ENCODE measurements at regions of chr3 and their contacts with region 1.

Region 1: GRCh38 chr3:39288300-39288808 is 8.5 kb upstream of the CX3CR1 start:
- DNase-seq: peak; percentile 61 to 91 (median 72)
- ATAC-seq: peak; percentile 94
- H3K4me3 ChIP-seq: no peak overlapping the region
- H3K4me3 Mint-ChIP-seq: no peak overlapping the region
- H3K27ac ChIP-seq: no peak overlapping the region
- H3K27ac Mint-ChIP-seq: no peak overlapping the region
- H3K4me1 ChIP-seq: peaks cover 22% of the 10 kb centered on the region
- H3K4me1 Mint-ChIP-seq: peaks cover 12% of the 10 kb centered on the region
- H3K27me3 ChIP-seq: no peaks in the 10 kb centered on the region
- H3K27me3 Mint-ChIP-seq: no peaks in the 10 kb centered on the region
- CTCF ChIP-seq: peak; percentile 92

Region 2: DNA sequence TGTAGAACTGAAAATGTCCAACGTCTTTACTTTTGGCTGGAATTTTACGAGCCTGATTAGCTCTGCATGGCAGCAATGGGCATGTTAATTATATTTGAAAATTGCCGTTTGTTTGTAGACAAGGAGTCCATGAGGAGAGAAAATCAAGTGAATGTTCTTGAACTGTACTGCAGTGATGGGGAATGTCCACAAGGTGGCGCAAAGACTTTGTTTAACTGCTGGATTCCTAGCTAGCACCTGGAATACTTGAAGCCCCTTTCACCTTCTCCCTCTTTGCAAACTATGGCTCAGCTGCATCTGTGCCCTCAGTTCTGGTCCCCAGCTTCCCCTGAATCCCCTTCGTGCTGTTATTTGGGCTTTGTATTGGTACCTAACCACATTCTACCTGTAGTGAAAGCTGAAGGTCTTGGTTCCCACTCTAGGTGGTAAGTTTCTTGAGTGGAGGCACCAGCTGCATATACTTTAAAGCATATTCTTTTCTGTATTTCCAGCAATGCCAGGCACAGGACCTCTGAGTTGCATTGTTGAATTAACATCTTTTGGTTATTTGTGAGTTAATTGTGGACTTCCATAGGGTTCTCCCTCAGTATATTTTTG is 766.9 kb before region 1 on chr3:
- CTCF ChIA-PET with region 1: interaction called, 5 read pairs
- POLR2A ChIA-PET with region 1: no interaction called
- intact Hi-C with region 1: loop called (anchors 5 kb)
- DNase-seq: peak; percentile 41 to 82 (median 54)
- ATAC-seq: peak; percentile 69
- H3K4me3 ChIP-seq: no peak overlapping the region
- H3K4me3 Mint-ChIP-seq: no peak overlapping the region
- H3K27ac ChIP-seq: no peak overlapping the region
- H3K27ac Mint-ChIP-seq: peak overlapping the region; percentile 57
- H3K4me1 ChIP-seq: peaks cover 16% of the 10 kb centered on the region
- H3K4me1 Mint-ChIP-seq: peaks cover 40% of the 10 kb centered on the region
- H3K27me3 ChIP-seq: no peaks in the 10 kb centered on the region
- H3K27me3 Mint-ChIP-seq: no peaks in the 10 kb centered on the region
- CTCF ChIP-seq: peak; percentile 93

Region 3: DNA sequence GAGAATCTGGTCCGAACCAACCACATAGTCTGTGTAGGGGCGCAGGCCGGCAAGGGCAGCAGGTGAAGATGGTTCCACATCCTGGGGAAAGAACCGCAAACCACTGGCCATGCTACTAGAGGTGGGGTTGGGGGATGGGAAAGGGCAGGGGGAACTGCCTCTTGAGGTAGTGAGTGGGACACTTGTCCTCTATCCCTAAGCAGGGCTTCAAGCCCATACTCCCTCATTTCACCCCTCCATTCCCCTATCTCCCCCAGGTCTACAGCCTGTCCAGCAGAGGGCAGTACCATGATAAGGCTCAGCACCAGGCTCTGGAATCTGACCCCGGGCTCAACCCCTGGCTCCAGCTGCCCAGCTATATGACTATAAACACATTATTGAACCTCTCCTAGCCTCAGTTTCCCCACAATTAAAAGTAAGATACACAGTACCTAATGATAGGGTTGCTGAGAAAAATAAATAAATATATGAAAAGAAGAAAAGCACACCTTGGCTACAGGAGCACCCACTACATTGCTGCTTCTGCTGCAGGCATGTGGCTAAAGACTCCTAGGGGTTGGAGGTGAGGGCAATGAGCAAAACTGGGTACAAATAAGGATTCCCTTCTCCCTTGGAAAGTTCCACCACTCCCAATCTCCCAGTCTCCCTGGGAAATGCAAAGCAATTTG is 187.2 kb before region 1 on chr3:
- CTCF ChIA-PET with region 1: interaction called, 24 read pairs
- POLR2A ChIA-PET with region 1: interaction called, 3 read pairs
- intact Hi-C with region 1: loop called (anchors 1 kb)
- DNase-seq: peak in 11 of 14 experiments; percentile 17 to 78 (median 37)
- ATAC-seq: peak; percentile 66
- H3K4me3 ChIP-seq: no peak overlapping the region
- H3K4me3 Mint-ChIP-seq: no peak overlapping the region
- H3K27ac ChIP-seq: no peak overlapping the region
- H3K27ac Mint-ChIP-seq: peak overlapping the region; percentile 19
- H3K4me1 ChIP-seq: peaks cover 39% of the 10 kb centered on the region
- H3K4me1 Mint-ChIP-seq: peaks cover 42% of the 10 kb centered on the region
- H3K27me3 ChIP-seq: no peaks in the 10 kb centered on the region
- H3K27me3 Mint-ChIP-seq: no peaks in the 10 kb centered on the region
- CTCF ChIP-seq: peak; percentile 69

Region 4: GRCh38 chr3:39126532-39127071 is 161.8 kb before region 1 on chr3:
- CTCF ChIA-PET with region 1: interaction called, 68 read pairs
- POLR2A ChIA-PET with region 1: interaction called, 11 read pairs
- intact Hi-C with region 1: loop called (anchors 1 kb)
- DNase-seq: peak in 11 of 14 experiments; percentile 24 to 72 (median 45)
- ATAC-seq: peak; percentile 75
- H3K4me3 ChIP-seq: no peak overlapping the region
- H3K4me3 Mint-ChIP-seq: no peak overlapping the region
- H3K27ac ChIP-seq: no peak overlapping the region
- H3K27ac Mint-ChIP-seq: peak overlapping the region; percentile 3
- H3K4me1 ChIP-seq: peaks cover 20% of the 10 kb centered on the region
- H3K4me1 Mint-ChIP-seq: peaks cover 29% of the 10 kb centered on the region
- H3K27me3 ChIP-seq: no peaks in the 10 kb centered on the region
- H3K27me3 Mint-ChIP-seq: no peaks in the 10 kb centered on the region
- CTCF ChIP-seq: peak; percentile 45

Region 5: GRCh38 chr3:39208463-39209055 is 79.8 kb before region 1 on chr3:
- CTCF ChIA-PET with region 1: interaction called, 6 read pairs
- POLR2A ChIA-PET with region 1: no interaction called
- intact Hi-C with region 1: loop called (anchors 5 kb)
- DNase-seq: peak in 7 of 14 experiments; percentile 13 to 72 (median 55)
- ATAC-seq: no peak
- H3K4me3 ChIP-seq: no peak overlapping the region
- H3K4me3 Mint-ChIP-seq: no peak overlapping the region
- H3K27ac ChIP-seq: no peak overlapping the region
- H3K27ac Mint-ChIP-seq: no peak overlapping the region
- H3K4me1 ChIP-seq: no peaks in the 10 kb centered on the region
- H3K4me1 Mint-ChIP-seq: peaks cover 9% of the 10 kb centered on the region
- H3K27me3 ChIP-seq: no peaks in the 10 kb centered on the region
- H3K27me3 Mint-ChIP-seq: peaks cover 3% of the 10 kb centered on the region
- CTCF ChIP-seq: peak; percentile 65

Region 6: GRCh38 chr3:39378088-39378487 is 89.7 kb after region 1 on chr3:
- CTCF ChIA-PET with region 1: interaction called, 10 read pairs
- POLR2A ChIA-PET with region 1: no interaction called
- intact Hi-C with region 1: loop called (anchors 2 to 5 kb)
- DNase-seq: peak; percentile 28 to 82 (median 50)
- ATAC-seq: peak; percentile 85
- H3K4me3 ChIP-seq: no peak overlapping the region
- H3K4me3 Mint-ChIP-seq: peak overlapping the region; percentile 26
- H3K27ac ChIP-seq: no peak overlapping the region
- H3K27ac Mint-ChIP-seq: no peak overlapping the region
- H3K4me1 ChIP-seq: peaks cover 13% of the 10 kb centered on the region
- H3K4me1 Mint-ChIP-seq: peaks cover 15% of the 10 kb centered on the region
- H3K27me3 ChIP-seq: no peaks in the 10 kb centered on the region
- H3K27me3 Mint-ChIP-seq: no peaks in the 10 kb centered on the region
- CTCF ChIP-seq: peak; percentile 82

Measured in CD4-positive, alpha-beta T cell (primary cell).